A673 (cell line): ENCODE measurements at regions of chr13 and their contacts with region 1.

Region 1: DNA sequence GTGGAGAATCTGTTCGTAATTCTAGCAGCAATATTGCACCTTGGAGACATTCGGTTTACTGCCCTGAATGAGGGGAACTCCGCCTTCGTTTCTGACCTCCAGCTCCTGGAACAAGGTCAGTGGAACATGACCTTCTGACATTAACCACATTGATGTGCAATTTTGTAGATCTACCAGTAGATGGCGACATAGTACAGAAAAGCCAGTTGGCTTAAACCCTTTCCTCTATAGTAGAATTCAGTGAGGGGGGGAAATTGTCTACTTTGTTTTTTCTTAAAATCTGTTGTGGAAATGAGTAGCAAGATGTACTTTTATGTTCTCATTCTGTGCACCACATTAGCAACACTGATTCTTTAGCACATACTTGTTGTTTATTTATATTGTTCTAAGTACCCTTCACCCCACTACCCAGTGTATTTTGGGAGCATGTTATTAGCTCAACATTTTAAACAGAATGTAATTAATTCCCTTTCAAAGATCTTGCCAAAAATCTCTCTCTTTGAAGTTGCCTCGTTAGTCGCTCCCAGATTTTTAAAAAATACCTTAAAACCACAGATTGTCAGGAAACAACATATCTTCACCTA is 332.2 kb downstream of the MYO16 start:
- DNase-seq: peak; percentile 83
- H3K4me3 ChIP-seq: no peak overlapping the region
- H3K27ac ChIP-seq: peak overlapping the region; percentile 61
- H3K4me1 ChIP-seq: peaks cover 55% of the 10 kb centered on the region
- H3K27me3 ChIP-seq: no peaks in the 10 kb centered on the region
- CTCF ChIP-seq: peak; percentile 83

Region 2: GRCh38 chr13:108020027-108020426 is 941.6 kb before region 1 on chr13:
- CTCF ChIA-PET with region 1: no interaction called
- POLR2A ChIA-PET with region 1: no interaction called
- intact Hi-C with region 1: no loop called
- DNase-seq: no peak
- H3K4me3 ChIP-seq: no peak overlapping the region
- H3K27ac ChIP-seq: no peak overlapping the region
- H3K4me1 ChIP-seq: no peaks in the 10 kb centered on the region
- H3K27me3 ChIP-seq: no peaks in the 10 kb centered on the region
- CTCF ChIP-seq: no peak

Region 3: GRCh38 chr13:109055850-109056249 is 94.2 kb after region 1 on chr13:
- CTCF ChIA-PET with region 1: no interaction called
- POLR2A ChIA-PET with region 1: no interaction called
- intact Hi-C with region 1: no loop called
- DNase-seq: no peak
- H3K4me3 ChIP-seq: no peak overlapping the region
- H3K27ac ChIP-seq: no peak overlapping the region
- H3K4me1 ChIP-seq: no peaks in the 10 kb centered on the region
- H3K27me3 ChIP-seq: no peaks in the 10 kb centered on the region
- CTCF ChIP-seq: no peak

Region 4: GRCh38 chr13:109113427-109113826 is 151.8 kb after region 1 on chr13:
- CTCF ChIA-PET with region 1: no interaction called
- POLR2A ChIA-PET with region 1: no interaction called
- intact Hi-C with region 1: no loop called
- DNase-seq: no peak
- H3K4me3 ChIP-seq: no peak overlapping the region
- H3K27ac ChIP-seq: no peak overlapping the region
- H3K4me1 ChIP-seq: no peaks in the 10 kb centered on the region
- H3K27me3 ChIP-seq: no peaks in the 10 kb centered on the region
- CTCF ChIP-seq: no peak

Region 5: DNA sequence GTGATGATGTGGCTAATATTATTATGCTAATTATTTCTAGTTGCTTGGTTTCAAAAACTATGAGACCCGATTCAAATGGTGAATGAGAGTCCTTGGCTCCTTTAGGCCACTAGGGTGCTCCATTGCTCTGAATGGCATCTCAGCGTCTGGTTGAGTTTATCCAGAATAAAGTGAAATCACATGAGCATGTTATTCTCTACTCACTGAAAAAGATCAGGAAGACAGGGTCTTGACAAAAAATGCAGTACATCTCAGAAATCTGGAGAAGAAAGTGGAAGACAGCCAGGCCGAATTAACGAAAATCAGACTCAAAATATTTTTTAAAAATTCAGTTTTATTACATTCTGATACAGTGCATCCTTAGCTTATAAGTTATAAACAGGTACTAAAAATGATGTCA is 184.0 kb after region 1 on chr13:
- CTCF ChIA-PET with region 1: interaction called, 4 read pairs
- POLR2A ChIA-PET with region 1: no interaction called
- intact Hi-C with region 1: loop called (anchors 1 kb)
- DNase-seq: peak; percentile 93
- H3K4me3 ChIP-seq: no peak overlapping the region
- H3K27ac ChIP-seq: peak overlapping the region; percentile 80
- H3K4me1 ChIP-seq: peaks cover 64% of the 10 kb centered on the region
- H3K27me3 ChIP-seq: no peaks in the 10 kb centered on the region
- CTCF ChIP-seq: peak; percentile 92

Region 6: GRCh38 chr13:109654341-109655205 is 692.9 kb after region 1 on chr13:
- CTCF ChIA-PET with region 1: no interaction called
- POLR2A ChIA-PET with region 1: no interaction called
- intact Hi-C with region 1: loop called (anchors 5 kb)
- DNase-seq: peak; percentile 63
- H3K4me3 ChIP-seq: no peak overlapping the region
- H3K27ac ChIP-seq: peak overlapping the region; percentile 94
- H3K4me1 ChIP-seq: peaks cover 67% of the 10 kb centered on the region
- H3K27me3 ChIP-seq: no peaks in the 10 kb centered on the region
- CTCF ChIP-seq: no peak

Region 7: GRCh38 chr13:110108347-110109174 is 1146.9 kb after region 1 on chr13:
- CTCF ChIA-PET with region 1: no interaction called
- POLR2A ChIA-PET with region 1: no interaction called
- intact Hi-C with region 1: loop called (anchors 5 kb)
- DNase-seq: peak; percentile 85
- H3K4me3 ChIP-seq: no peak overlapping the region
- H3K27ac ChIP-seq: no peak overlapping the region
- H3K4me1 ChIP-seq: peaks cover 12% of the 10 kb centered on the region
- H3K27me3 ChIP-seq: no peaks in the 10 kb centered on the region
- CTCF ChIP-seq: peak; percentile 76